H1 (cell line): ENCODE measurements at regions of chr2 and their contacts with region 1.

Region 1: GRCh38 chr2:202883987-202884675 is 12.6 kb upstream of the ICA1L start:
- DNase-seq: no peak
- H3K4me3 ChIP-seq: no peak overlapping the region
- H3K27ac ChIP-seq: no peak overlapping the region
- H3K4me1 ChIP-seq: no peaks in the 10 kb centered on the region
- H3K27me3 ChIP-seq: no peaks in the 10 kb centered on the region
- CTCF ChIP-seq: no peak
- EP300 ChIP-seq: no peak
- POLR2A ChIP-seq: no peak
- RAD21 ChIP-seq: no peak

Region 2: GRCh38 chr2:202870431-202871299 is 13.5 kb before region 1 on chr2:
- CTCF ChIA-PET with region 1: interaction called, 10 read pairs
- POLR2A ChIA-PET with region 1: interaction called, 7 read pairs
- DNase-seq: peak; percentile 50 to 83
- H3K4me3 ChIP-seq: peak overlapping the region; percentile 70 to 84 (median 74)
- H3K27ac ChIP-seq: 0 out of 2 replicates have a peak overlapping the region, but pooled peaks have one; percentile 39
- H3K4me1 ChIP-seq: no peaks in the 10 kb centered on the region
- H3K27me3 ChIP-seq: no peaks in the 10 kb centered on the region
- CTCF ChIP-seq: peak; percentile 38 to 77 (median 65); a peak in 3 of 4 replicates
- EP300 ChIP-seq: no peak
- POLR2A ChIP-seq: peak; percentile 74 to 75
- RAD21 ChIP-seq: peak; percentile 50 to 53; a peak in 3 of 4 replicates

Region 3: GRCh38 chr2:203383038-203383437 is 498.9 kb after region 1 on chr2:
- CTCF ChIA-PET with region 1: no interaction called
- POLR2A ChIA-PET with region 1: no interaction called
- DNase-seq: no peak
- H3K4me3 ChIP-seq: no peak overlapping the region
- H3K27ac ChIP-seq: no peak overlapping the region
- H3K4me1 ChIP-seq: no peaks in the 10 kb centered on the region
- H3K27me3 ChIP-seq: no peaks in the 10 kb centered on the region
- CTCF ChIP-seq: no peak
- EP300 ChIP-seq: no peak
- POLR2A ChIP-seq: no peak
- RAD21 ChIP-seq: no peak